ENCODE measurements at regions of chr16 and their contacts with region 1.

Region 1: GRCh38 chr16:88442727-88443576 is 10.1 kb upstream of the ZFPM1 start:
- DNase-seq: peak; percentile 27
- H3K4me3 ChIP-seq: no peak overlapping the region
- H3K27ac ChIP-seq: no peak overlapping the region
- H3K27me3 ChIP-seq: no peaks in the 10 kb centered on the region
- CTCF ChIP-seq: peak; percentile 91

Region 2: GRCh38 chr16:88287219-88287618 is 155.7 kb before region 1 on chr16:
- in situ Hi-C with region 1: no loop called
- DNase-seq: no peak
- H3K4me3 ChIP-seq: no peak overlapping the region
- H3K27ac ChIP-seq: no peak overlapping the region
- H3K27me3 ChIP-seq: no peaks in the 10 kb centered on the region
- CTCF ChIP-seq: peak; percentile 80

Region 3: DNA sequence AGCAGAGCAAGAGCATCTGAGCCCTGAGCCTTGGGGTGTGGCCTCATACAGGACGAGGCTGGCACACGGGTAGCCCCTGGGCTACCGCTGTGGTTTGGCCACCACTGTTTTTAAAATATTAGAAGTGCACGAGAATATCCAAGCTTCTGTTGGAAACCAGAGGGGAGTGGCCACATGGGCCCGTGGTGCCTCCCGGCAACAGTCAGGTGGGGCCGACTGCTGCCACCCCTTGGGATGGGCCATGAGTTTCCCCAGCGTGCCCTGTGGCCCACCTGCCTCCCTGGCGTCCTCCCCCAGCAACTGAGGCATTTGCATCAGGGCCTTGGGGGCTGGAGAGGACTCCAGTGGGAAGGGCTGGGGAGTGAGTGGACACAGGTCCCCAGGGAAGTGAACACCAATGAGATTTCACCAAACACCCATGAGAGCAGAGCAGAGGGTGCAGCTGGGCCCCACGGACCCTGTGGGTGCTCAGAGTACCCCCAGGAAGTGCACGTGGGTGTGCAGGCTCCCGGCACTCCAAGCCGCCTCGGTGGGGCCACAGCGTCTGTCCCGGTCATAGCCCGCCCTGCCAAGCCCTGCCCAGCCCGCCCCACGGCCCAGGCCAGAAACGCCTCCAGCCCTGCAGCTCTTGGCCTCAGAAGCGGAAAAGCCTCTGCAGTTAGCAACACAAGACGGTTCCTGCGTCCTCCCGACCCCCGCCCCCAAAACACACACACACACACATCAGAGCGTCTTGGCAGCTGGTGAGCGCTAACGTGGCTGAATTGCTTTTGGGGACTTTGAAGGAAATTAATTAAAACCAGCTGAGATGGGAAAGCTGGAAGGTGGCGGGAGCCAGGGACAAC is 37.5 kb before region 1 on chr16:
- in situ Hi-C with region 1: no loop called
- DNase-seq: peak; percentile 30
- H3K4me3 ChIP-seq: no peak overlapping the region
- H3K27ac ChIP-seq: no peak overlapping the region
- H3K27me3 ChIP-seq: no peaks in the 10 kb centered on the region
- CTCF ChIP-seq: no peak

Region 4: GRCh38 chr16:88533932-88534732 is 91.2 kb after region 1 on chr16:
- in situ Hi-C with region 1: loop called (anchors 25 kb)
- DNase-seq: peak; percentile 29
- H3K4me3 ChIP-seq: peak overlapping the region; percentile 54
- H3K27ac ChIP-seq: peak overlapping the region; percentile 29
- H3K27me3 ChIP-seq: peaks cover under 1% of the 10 kb centered on the region
- CTCF ChIP-seq: no peak

Region 5: GRCh38 chr16:88599092-88599733 is 156.3 kb after region 1 on chr16:
- in situ Hi-C with region 1: no loop called
- DNase-seq: no peak
- H3K4me3 ChIP-seq: no peak overlapping the region
- H3K27ac ChIP-seq: no peak overlapping the region
- H3K27me3 ChIP-seq: no peaks in the 10 kb centered on the region
- CTCF ChIP-seq: no peak

Region 6: GRCh38 chr16:88790312-88791211 is 347.6 kb after region 1 on chr16:
- in situ Hi-C with region 1: no loop called
- DNase-seq: no peak
- H3K4me3 ChIP-seq: no peak overlapping the region
- H3K27ac ChIP-seq: no peak overlapping the region
- H3K27me3 ChIP-seq: no peaks in the 10 kb centered on the region
- CTCF ChIP-seq: no peak